ENCODE measurements at regions of chr9 and their contacts with region 1.

Region 1: DNA sequence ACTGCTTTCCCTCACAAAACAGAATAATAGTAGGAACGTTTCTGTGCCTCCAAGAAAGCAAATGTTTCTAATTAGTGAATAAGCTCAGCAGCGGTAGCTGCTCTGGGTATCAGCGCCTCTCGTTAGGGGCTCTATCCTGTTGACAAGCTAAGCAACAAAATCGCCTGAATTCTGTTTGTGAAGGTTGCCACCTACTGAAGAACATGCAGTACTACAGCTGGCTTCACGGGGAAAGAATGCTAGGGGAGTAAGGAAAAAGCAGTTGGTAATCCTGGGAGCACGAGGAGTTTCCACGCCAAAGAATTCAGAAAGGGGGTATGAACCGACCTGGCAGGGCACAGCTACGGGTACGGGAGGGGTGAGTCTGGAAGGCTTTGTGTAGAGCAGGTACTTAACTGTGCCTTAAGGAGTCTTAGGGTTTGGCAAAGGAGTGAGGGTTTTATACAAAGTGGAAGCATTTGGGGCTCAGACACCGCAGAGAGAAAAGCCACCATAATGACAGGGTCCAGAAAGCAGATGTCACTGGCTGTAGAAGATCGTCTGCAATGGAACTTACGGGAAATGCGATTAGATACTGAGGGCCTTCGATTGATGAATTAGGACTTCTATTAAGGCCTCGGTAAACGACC is 171.7 kb downstream of the TTC39B start:
- DNase-seq: peak; percentile 85
- H3K4me3 ChIP-seq: no peak overlapping the region
- H3K27ac ChIP-seq: peak overlapping the region; percentile 59
- H3K4me1 ChIP-seq: no peaks in the 10 kb centered on the region
- H3K27me3 ChIP-seq: no peaks in the 10 kb centered on the region
- CTCF ChIP-seq: peak; percentile 79

Region 2: DNA sequence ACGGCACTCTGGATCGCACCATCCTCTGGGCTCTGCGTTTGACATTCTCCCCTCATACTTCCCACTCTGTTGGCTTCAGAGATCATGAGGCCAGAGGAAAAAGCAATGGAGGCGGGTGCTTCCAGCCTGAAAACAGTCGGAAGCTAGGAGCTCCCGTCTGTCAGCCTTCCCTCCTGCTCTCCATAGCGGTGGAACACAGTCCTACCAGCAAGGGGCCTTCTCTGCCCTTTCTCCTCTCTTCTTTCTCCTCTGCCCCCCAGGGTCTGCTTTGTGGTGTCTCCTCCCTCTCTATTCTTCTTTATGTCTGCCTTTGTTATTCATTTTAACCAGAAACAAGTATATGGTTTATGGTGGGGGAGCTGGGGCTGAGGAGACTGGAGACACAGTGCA is 668.9 kb before region 1 on chr9:
- CTCF ChIA-PET with region 1: interaction called, 3 read pairs
- POLR2A ChIA-PET with region 1: no interaction called
- intact Hi-C with region 1: loop called (anchors 10 kb)
- DNase-seq: no peak
- H3K4me3 ChIP-seq: no peak overlapping the region
- H3K27ac ChIP-seq: no peak overlapping the region
- H3K4me1 ChIP-seq: peaks cover 6% of the 10 kb centered on the region
- H3K27me3 ChIP-seq: no peaks in the 10 kb centered on the region
- CTCF ChIP-seq: no peak

Region 3: GRCh38 chr9:14779566-14780022 is 355.7 kb before region 1 on chr9:
- CTCF ChIA-PET with region 1: no interaction called
- POLR2A ChIA-PET with region 1: no interaction called
- intact Hi-C with region 1: loop called (anchors 10 kb)
- DNase-seq: no peak
- H3K4me3 ChIP-seq: no peak overlapping the region
- H3K27ac ChIP-seq: no peak overlapping the region
- H3K4me1 ChIP-seq: no peaks in the 10 kb centered on the region
- H3K27me3 ChIP-seq: no peaks in the 10 kb centered on the region
- CTCF ChIP-seq: no peak

Region 4: DNA sequence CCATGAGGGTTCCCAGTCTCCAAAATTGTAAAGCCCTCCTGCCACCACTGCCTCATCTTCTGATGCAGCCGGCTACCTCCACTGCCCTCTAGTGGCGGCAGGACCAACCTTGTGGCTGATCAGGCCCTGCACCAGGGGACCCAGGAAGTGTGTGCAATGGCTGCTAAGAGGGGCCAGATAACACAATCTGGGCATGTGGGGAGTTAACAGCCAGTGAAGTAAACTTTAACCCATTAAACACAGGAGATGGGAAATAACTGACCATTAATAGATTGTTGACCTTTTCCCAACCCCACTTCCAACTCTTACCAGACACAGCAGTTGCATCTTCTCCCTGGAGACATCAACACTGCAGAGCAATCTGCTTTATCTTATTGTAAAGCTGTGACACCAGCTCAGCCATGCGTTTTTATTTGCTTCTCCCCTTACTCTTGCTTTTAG is 288.4 kb before region 1 on chr9:
- CTCF ChIA-PET with region 1: no interaction called
- POLR2A ChIA-PET with region 1: no interaction called
- intact Hi-C with region 1: loop called (anchors 10 kb)
- DNase-seq: peak; percentile 79
- H3K4me3 ChIP-seq: no peak overlapping the region
- H3K27ac ChIP-seq: no peak overlapping the region
- H3K4me1 ChIP-seq: peaks cover 4% of the 10 kb centered on the region
- H3K27me3 ChIP-seq: no peaks in the 10 kb centered on the region
- CTCF ChIP-seq: peak; percentile 78

Region 5: GRCh38 chr9:14961372-14962068 is 173.8 kb before region 1 on chr9:
- CTCF ChIA-PET with region 1: no interaction called
- POLR2A ChIA-PET with region 1: no interaction called
- intact Hi-C with region 1: no loop called
- DNase-seq: no peak
- H3K4me3 ChIP-seq: no peak overlapping the region
- H3K27ac ChIP-seq: peak overlapping the region; percentile 86
- H3K4me1 ChIP-seq: peaks cover 34% of the 10 kb centered on the region
- H3K27me3 ChIP-seq: no peaks in the 10 kb centered on the region
- CTCF ChIP-seq: no peak

Region 6: GRCh38 chr9:14993061-14993800 is 142.0 kb before region 1 on chr9:
- CTCF ChIA-PET with region 1: no interaction called
- POLR2A ChIA-PET with region 1: no interaction called
- intact Hi-C with region 1: loop called (anchors 10 kb)
- DNase-seq: peak; percentile 94
- H3K4me3 ChIP-seq: peak overlapping the region; percentile 56
- H3K27ac ChIP-seq: peak overlapping the region; percentile 96
- H3K4me1 ChIP-seq: no peaks in the 10 kb centered on the region
- H3K27me3 ChIP-seq: no peaks in the 10 kb centered on the region
- CTCF ChIP-seq: no peak

Region 7: DNA sequence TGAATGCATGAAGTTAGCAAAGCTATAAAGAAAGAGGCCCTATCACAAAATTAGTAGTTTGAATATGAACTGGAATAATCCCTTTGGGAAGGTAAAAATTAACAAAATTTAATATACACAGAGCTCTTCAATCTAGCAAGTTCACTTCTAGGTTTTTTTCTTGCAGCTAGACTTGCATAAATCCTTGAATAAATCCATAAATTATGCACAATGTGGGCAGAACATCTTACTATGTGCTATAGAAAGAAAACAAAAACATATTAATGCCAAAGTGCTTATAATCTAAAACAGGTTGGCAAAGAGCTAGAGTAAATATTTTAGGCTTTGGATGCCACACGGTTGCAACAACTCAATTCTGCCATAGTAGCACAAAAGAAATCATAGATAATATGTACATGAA is 86.5 kb before region 1 on chr9:
- CTCF ChIA-PET with region 1: no interaction called
- POLR2A ChIA-PET with region 1: no interaction called
- intact Hi-C with region 1: loop called (anchors 5 kb)
- DNase-seq: no peak
- H3K4me3 ChIP-seq: no peak overlapping the region
- H3K27ac ChIP-seq: peak overlapping the region; percentile 74
- H3K4me1 ChIP-seq: peaks cover 18% of the 10 kb centered on the region
- H3K27me3 ChIP-seq: no peaks in the 10 kb centered on the region
- CTCF ChIP-seq: no peak